ENCODE measurements at regions of chr13 and their contacts with region 1.

Region 1: DNA sequence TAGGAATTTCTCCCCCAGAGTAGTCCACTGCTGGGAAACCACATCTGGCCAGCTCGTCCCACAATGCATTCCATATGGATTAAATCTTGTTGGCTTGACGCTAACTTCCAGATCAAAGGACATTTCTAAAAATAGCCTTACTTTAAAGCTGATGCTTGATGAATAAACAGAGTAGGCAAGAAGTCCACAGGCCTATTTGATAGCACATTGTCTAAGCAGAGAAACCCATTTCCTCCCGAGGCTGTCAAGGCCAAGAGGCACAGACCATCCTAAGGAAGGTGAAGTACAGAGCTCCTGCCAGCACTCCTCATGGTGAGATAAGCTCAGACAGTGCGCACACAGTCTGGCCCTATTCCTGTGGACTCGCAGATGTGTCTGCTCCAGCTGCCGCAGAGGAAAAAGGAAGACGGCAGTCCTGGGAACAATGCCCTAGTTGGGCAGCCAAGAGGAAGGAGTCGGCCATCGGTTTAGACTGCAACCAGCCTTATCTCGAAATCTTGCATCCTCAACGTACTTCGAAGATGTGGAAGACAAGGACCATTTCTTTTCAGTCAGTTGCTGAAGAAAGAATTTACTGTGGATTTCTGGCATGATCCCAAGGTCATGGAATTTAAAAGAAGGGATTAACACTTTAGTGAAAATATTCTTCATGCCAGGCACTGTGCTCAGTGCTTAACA is 156.8 kb downstream of the RGCC start:
- DNase-seq: peak; percentile 65
- ATAC-seq: peak; percentile 86

Region 2: GRCh38 chr13:41384755-41385503 is 229.2 kb before region 1 on chr13:
- intact Hi-C with region 1: loop called (anchors 2 kb)
- DNase-seq: no peak
- ATAC-seq: no peak

Region 3: DNA sequence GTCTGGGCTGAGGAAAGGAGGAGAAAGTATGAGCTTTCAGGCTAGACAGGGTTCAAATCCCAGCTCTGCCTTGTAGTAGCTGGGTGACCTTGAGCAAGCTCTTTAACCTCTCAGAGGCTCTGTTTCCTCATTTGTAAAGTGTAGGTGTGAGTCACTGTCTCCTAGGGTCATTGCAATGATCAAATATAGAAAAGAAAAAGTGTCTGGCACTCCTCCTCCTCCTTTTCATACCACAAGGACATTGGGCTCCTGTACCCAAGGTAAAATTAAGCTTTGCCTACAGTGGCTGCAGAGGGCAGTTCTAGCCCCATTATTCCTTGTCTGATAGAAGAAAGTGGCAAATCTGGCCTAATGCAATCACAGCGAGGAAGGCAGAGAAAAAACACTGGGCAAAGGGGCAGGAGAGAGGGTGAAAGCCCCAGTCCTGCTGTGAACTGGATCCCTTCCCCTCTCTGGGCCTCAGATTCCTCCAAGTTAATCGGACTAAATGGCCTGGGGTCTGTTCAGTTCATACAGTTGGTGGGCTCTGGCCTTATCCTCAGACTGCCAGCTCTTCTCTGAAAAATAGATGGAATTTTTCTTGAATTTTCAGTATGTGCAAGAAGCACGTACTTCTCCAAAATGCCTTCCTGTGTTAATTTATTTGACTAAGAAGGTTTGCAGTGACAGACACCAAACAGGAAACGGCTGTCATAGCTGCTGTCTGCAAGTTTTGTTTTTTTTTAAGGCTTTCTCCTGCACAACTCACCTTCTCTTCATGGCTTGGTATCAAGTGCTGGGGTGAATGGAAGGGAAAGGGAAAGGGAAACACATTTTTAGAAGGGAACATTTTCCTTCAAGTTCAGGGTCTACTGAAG is 121.5 kb before region 1 on chr13:
- intact Hi-C with region 1: loop called (anchors 5 kb)
- DNase-seq: no peak
- ATAC-seq: no peak

Measured in Right ventricle myocardium inferior (tissue), 1 donor.